ENCODE measurements at regions of chr9 and their contacts with region 1.

Region 1: GRCh38 chr9:20640331-20641187 is 18.3 kb upstream of the MLLT3 start:
- DNase-seq: peak; percentile 83
- H3K4me3 ChIP-seq: no peak overlapping the region
- H3K27ac ChIP-seq: peak overlapping the region; percentile 49
- H3K4me1 ChIP-seq: peaks cover 38% of the 10 kb centered on the region
- H3K27me3 ChIP-seq: no peaks in the 10 kb centered on the region
- CTCF ChIP-seq: no peak

Region 2: DNA sequence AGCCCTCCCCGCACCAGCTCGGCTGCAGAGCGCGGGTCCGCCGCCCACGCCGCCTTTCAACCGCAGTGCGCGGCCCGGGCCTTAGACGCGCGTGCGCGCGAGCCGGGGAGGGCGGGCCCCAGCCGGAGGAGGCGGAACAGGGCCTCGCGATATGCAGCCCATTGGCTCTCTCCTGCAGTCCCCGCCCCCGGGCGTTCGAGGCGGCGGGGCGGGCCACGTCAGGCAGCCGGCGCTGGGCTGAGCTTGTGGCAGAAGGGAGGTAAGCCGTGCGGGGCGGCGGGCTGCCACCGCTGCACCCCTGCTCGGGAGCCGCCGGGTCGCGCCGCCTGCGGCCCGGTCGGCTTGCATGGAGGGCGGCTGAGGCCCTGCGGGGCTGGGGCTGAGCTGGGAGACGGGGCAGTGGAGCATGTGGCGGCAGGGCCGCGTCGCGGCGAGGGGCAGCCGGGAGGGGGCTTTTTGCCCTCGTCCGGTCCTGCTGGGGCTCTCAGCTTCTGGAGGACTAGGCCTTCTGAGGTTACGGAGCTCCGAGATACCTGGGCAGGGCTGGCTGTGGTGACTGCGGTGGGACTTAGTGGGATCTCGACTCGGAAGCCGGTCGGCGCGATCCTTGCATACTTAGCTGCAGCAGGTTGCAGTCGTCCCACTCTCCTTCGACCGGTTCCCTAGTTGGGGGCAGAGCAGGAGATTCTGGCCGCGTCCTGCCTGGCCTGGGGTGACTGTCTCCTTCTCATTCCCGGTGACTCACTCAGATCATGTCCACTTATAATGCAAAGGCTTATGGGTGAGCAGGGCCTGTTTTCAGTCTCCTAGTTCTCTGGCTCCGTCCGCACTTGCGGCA is 43.7 kb after region 1 on chr9 and contains the start of gene FOCAD:
- CTCF ChIA-PET with region 1: no interaction called
- POLR2A ChIA-PET with region 1: no interaction called
- intact Hi-C with region 1: loop called (anchors 5 kb)
- DNase-seq: peak; percentile 94
- H3K4me3 ChIP-seq: peak within 1 kb of the TSS; percentile 82
- H3K27ac ChIP-seq: peak within 1 kb of the TSS; percentile 91
- H3K4me1 ChIP-seq: peaks cover 34% of the 10 kb centered on the region
- H3K27me3 ChIP-seq: no peaks in the 10 kb centered on the region
- CTCF ChIP-seq: no peak
- total RNA-seq, gene FOCAD: 42.7 and 42.8 TPM in 2 replicates

Region 3: DNA sequence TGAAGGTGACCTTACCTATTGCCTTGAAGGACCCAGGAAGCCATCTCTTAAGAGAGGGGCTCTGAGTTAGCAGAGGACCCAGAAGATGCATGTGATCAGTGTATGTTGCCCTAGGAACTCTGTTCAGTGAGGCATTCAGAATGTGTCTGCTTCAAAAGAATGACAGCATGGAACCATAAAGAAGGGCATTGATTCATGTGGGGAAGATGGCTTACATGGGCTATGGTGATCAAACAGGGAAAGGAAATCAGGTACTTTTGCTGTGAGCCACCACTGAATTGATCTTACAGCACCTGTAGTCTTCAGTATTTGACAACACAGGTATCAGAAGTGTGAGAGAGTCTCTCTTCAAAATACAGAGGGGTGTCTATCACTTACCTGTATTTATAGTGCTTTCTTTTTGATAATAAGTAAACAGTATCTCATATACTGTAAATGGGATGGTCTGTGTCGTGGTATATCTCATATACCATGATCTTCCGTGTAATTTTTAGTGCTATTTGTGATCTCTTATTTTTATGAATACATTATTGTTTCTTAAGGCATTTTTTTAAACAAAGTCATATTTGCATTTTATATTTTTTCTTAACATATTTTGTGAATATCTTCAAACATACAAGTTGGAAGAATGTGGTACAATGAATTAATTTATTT is 100.5 kb after region 1 on chr9:
- CTCF ChIA-PET with region 1: no interaction called
- POLR2A ChIA-PET with region 1: no interaction called
- intact Hi-C with region 1: no loop called
- DNase-seq: no peak
- H3K4me3 ChIP-seq: no peak overlapping the region
- H3K27ac ChIP-seq: no peak overlapping the region
- H3K4me1 ChIP-seq: peaks cover 23% of the 10 kb centered on the region
- H3K27me3 ChIP-seq: no peaks in the 10 kb centered on the region
- CTCF ChIP-seq: no peak